CD14-positive monocyte (primary cell): ENCODE measurements at regions of chr2 and their contacts with region 1.

Region 1: DNA sequence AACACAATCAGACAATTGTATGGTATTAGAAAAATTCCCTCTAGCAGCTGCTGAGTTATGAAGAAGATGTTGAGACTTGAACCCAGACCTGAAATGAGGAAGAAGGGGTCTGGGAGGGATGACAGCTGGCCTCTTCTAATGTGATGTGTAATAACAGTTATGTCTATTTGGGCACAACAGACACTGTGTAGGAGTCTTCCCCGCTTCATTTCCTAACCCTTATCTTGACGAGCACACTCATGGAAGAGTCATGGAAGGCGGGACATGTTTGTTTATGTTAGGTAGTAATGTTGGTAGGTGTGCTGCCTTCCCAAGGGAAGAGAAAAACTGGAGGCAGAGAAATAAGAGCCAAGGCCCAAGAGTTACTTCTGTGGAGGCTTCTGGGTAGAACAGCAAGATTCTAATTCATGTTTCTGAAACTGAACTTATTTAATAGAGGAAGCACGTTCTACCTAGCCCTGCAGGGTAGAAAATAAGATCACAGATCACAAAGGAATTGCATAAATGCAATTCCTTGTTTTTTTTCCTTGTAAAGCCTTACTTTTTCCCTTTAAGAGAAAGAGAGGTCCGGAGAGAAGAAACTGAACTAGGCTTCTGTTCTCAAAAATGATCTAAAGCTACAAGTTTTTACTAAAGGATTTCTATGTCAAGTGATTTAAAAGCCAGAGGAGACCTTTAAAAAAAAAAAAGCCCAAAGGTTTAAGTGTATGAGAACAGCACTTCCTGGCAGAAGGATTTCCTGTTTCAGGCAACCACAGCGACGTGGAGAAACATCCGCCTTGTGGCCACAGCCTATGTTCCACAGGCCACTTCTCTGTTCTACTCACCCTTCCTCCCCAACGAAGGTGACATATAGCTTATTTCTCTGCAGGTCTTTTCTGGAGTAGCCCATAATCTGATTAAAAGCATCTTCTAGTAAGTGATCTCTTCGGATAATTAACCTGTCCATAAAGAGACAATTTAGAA is 68.5 kb upstream of the STK17B start:
- DNase-seq: peak; percentile 90 to 97 (median 96)
- H3K4me3 ChIP-seq: peak overlapping the region in 1 of 3 experiments; percentile 58
- H3K4me3 Mint-ChIP-seq: peak overlapping the region; percentile 6 to 54
- H3K27ac ChIP-seq: peak overlapping the region; percentile 63 to 97
- H3K27ac Mint-ChIP-seq: peak overlapping the region; percentile 95 to 100 (median 98)
- H3K4me1 ChIP-seq: peaks cover 55 to 57% of the 10 kb centered on the region in 2 donors
- H3K4me1 Mint-ChIP-seq: peaks cover 57% of the 10 kb centered on the region
- H3K27me3 ChIP-seq: no peaks in the 10 kb centered on the region
- H3K27me3 Mint-ChIP-seq: peaks cover 0 to 4% (median 0%) of the 10 kb centered on the region in 3 donors
- CTCF ChIP-seq: peak; percentile 41

Region 2: GRCh38 chr2:196205881-196206435 is 33.9 kb before region 1 on chr2:
- intact Hi-C with region 1: loop called in 1 of 2 experiments (anchors 2 kb)
- DNase-seq: peak; percentile 21 to 85 (median 67)
- H3K4me3 ChIP-seq: no peak overlapping the region
- H3K4me3 Mint-ChIP-seq: peak overlapping the region in 1 of 2 donors; percentile 53
- H3K27ac ChIP-seq: no peak overlapping the region
- H3K27ac Mint-ChIP-seq: peak overlapping the region in 1 of 7 donors; percentile 75
- H3K4me1 ChIP-seq: peaks cover under 1 to 8% of the 10 kb centered on the region in 2 donors
- H3K4me1 Mint-ChIP-seq: peaks cover 23% of the 10 kb centered on the region
- H3K27me3 ChIP-seq: no peaks in the 10 kb centered on the region
- H3K27me3 Mint-ChIP-seq: peaks cover 0 to 2% (median 0%) of the 10 kb centered on the region in 3 donors
- CTCF ChIP-seq: no peak

Region 3: DNA sequence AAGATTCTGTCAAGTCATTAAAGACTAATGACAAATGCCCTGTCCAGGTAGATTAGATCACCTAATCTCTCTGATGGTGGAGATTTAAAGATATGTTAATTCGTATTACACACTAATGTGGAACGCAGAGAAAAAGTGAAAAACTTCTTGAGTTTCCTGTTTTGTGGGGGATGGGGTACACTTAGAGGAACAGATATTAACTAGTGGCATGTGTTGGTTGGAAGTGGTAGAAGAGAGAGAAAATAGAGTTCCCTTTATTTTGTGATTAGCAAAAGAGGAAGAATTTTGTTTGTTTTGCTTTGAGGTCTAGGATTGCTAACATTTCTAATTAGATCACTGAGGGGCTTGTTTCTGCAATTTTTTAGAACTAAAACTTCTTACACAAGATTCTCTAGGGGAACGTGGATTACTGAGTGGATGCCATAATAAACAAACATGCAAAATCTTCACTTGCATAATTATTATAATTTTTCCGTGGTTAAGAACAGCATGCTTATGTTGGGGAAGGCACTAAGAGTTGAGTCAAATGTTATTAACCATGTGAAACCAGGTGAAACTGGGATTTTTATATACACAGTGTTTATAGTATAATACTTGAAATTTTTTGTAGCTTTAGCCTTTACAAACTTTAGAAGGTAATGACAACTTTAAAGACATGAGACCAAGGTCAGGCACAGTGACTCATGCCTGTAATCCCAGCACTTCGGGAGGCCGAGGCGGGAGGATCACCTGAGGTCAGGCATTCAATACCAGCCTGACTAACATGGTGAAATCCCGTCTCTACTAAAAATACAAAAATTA is 28.8 kb after region 1 on chr2:
- intact Hi-C with region 1: loop called (anchors 1 to 2 kb)
- DNase-seq: peak; percentile 74 to 88 (median 74)
- H3K4me3 ChIP-seq: peak overlapping the region; percentile 26 to 62 (median 36)
- H3K4me3 Mint-ChIP-seq: peak overlapping the region; percentile 45 to 66
- H3K27ac ChIP-seq: peak overlapping the region; percentile 85 to 94
- H3K27ac Mint-ChIP-seq: peak overlapping the region; percentile 92 to 97 (median 95)
- H3K4me1 ChIP-seq: peaks cover 37 to 49% of the 10 kb centered on the region in 2 donors
- H3K4me1 Mint-ChIP-seq: peaks cover 38% of the 10 kb centered on the region
- H3K27me3 ChIP-seq: no peaks in the 10 kb centered on the region
- H3K27me3 Mint-ChIP-seq: peaks cover 0 to 1% (median 0%) of the 10 kb centered on the region in 3 donors
- CTCF ChIP-seq: no peak

Region 4: GRCh38 chr2:196887431-196887830 is 647.5 kb after region 1 on chr2:
- intact Hi-C with region 1: no loop called
- DNase-seq: no peak
- H3K4me3 ChIP-seq: no peak overlapping the region
- H3K4me3 Mint-ChIP-seq: no peak overlapping the region
- H3K27ac ChIP-seq: no peak overlapping the region
- H3K27ac Mint-ChIP-seq: peak overlapping the region in 1 of 7 donors; percentile 68
- H3K4me1 ChIP-seq: peaks cover 7% of the 10 kb centered on the region in 2 donors
- H3K4me1 Mint-ChIP-seq: peaks cover 10% of the 10 kb centered on the region
- H3K27me3 ChIP-seq: no peaks in the 10 kb centered on the region
- H3K27me3 Mint-ChIP-seq: no peaks in the 10 kb centered on the region
- CTCF ChIP-seq: no peak